ENCODE measurements at regions of chr14 and their contacts with region 1.

Region 1: DNA sequence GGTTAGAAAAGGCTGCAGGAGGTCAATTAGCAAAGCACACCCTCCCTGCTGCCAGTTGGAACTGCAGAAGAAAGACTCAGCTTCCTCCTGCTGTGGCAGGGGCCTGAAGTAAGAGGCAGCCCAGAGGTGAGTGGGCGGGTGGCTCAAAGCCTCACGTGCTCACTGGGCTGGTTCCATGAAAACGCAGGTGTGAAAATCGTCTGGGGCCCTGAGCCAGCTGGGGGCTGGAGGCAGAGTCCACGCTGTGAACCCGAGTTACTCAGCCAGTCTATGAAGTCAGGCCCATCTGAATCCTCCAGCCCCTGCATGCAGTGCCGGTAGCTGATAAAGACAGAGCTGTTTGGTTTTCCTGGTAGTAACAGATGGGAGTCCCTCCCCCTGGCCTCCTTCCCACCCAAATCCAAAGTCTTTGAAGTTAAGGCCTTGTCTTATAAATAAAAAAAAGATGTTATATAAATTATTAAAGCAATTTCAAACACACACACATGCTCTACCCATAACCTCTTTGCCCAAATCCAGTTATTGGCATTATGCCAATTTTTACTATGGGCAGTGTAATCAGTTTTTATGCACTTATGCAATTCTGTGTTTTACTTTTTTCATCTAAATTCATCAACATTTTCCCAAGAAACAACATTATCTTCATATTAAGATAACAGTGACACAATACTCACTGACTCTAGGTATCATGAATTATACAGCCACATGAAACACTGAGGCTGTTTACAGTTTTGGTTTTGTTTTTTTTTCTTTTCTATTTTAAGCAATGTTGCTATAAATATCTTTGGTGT is 57.9 kb upstream of the PNMA1 start:
- DNase-seq: peak; percentile 63
- ATAC-seq: peak; percentile 84
- H3K4me3 Mint-ChIP-seq: no peak overlapping the region
- H3K27ac Mint-ChIP-seq: no peak overlapping the region
- H3K4me1 Mint-ChIP-seq: peaks cover 34% of the 10 kb centered on the region
- H3K27me3 Mint-ChIP-seq: peaks cover 15% of the 10 kb centered on the region
- CTCF ChIP-seq: no peak

Region 2: DNA sequence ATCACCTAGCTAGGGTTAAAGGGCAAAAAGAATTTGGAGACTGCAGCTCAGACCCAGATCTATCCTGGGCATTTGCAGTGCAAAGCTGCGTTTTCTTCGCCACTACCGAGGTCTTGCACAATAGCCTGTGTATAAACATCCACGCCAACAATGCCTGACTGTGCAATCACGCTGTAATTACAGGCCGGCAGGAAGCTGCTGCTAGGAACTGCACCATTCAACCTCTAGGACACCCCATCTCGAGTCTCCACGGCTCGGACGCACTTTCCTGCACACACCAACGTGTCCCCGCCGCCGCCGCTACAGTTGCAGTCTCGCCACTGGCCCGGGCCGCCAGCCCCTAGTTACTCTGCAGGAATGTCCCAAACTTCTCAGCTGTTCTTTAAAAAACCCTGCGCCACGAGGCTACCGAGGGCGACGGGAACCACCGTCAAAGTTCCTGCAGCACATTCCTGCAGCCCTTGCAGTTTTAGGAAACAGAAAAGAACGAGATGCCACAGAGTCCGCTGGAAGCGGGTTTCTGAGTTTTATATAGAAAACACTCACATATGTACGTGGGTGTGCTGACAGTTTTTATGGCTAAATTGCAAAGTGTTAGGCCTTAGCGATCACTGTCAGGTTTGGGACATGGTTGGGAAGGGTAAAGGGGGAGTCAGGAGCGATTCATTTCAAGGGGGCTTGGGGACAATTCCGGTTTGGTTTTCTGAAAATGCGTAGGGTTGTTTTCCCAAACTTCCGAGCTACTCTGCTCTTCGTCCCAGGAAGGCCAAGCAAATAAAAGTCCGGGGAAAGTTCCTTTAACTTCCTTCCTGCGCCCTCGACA is 14.0 kb after region 1 on chr14:
- CTCF ChIA-PET with region 1: interaction called, 14 read pairs
- POLR2A ChIA-PET with region 1: no interaction called
- DNase-seq: peak; percentile 50
- ATAC-seq: peak; percentile 8
- H3K4me3 Mint-ChIP-seq: peak overlapping the region; percentile 90
- H3K27ac Mint-ChIP-seq: peak overlapping the region; percentile 63
- H3K4me1 Mint-ChIP-seq: peaks cover 43% of the 10 kb centered on the region
- H3K27me3 Mint-ChIP-seq: peaks cover 86% of the 10 kb centered on the region
- CTCF ChIP-seq: no peak

Measured in WTC11 (cell line).